Panc1 (cell line): ENCODE measurements at regions of chr17 and their contacts with region 1.

Region 1: GRCh38 chr17:30858561-30859245 is 26.9 kb downstream of the ATAD5 start:
- DNase-seq: no peak
- ATAC-seq: no peak
- H3K4me3 ChIP-seq: no peak overlapping the region
- H3K27ac ChIP-seq: no peak overlapping the region
- H3K4me1 ChIP-seq: no peaks in the 10 kb centered on the region
- H3K27me3 ChIP-seq: no peaks in the 10 kb centered on the region
- CTCF ChIP-seq: no peak

Region 2: DNA sequence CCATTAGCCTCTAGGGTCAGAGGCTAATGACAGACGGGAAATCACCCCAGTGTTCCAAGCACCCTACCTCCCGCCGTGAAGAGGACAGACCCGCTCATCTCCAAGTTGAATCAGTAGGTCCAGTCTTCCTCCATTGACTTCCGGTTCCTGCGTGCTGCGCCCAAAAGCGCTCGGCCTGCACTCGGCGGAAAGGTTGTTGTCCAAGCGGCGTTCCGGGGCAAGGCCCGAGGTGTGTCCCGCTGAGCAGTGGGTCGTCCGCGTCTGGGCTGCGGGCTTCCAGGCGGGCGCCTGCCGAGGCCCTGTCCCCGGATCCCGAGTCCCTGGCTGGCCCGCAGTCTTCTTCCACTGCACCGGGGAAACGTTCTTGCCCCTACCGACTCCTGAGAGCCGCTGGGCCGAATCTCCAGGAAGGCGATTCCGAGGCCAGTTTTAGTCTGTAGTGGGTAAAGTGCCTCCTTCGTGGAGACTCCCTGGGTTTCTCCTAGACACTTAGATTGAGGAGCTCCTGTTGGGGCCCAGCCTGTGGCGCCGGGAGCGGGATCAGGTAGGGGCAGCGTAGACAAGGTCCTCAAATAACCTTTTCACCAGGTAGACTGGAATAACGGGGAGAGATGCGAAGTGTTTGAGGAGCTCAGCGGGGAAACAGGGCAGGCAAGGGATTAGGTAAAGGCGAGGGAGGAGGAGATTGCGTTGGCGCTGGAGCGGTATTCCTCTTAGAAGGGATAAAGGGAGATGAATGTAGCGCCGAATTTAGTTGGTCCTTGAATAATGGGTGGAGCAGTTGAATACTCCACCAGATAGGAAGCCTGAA is 47.6 kb after region 1 on chr17 and contains the start of gene TEFM:
- CTCF ChIA-PET with region 1: no interaction called
- POLR2A ChIA-PET with region 1: no interaction called
- in situ Hi-C with region 1: no loop called
- intact Hi-C with region 1: no loop called
- DNase-seq: peak; percentile 72
- ATAC-seq: peak; percentile 98
- H3K4me3 ChIP-seq: peak within 1 kb of the TSS; percentile 88 to 99
- H3K27ac ChIP-seq: peak within 1 kb of the TSS; percentile 95
- H3K4me1 ChIP-seq: no peaks in the 10 kb centered on the region
- H3K27me3 ChIP-seq: no peaks in the 10 kb centered on the region
- CTCF ChIP-seq: no peak
- total RNA-seq, gene TEFM: 13.0 TPM

Region 3: DNA sequence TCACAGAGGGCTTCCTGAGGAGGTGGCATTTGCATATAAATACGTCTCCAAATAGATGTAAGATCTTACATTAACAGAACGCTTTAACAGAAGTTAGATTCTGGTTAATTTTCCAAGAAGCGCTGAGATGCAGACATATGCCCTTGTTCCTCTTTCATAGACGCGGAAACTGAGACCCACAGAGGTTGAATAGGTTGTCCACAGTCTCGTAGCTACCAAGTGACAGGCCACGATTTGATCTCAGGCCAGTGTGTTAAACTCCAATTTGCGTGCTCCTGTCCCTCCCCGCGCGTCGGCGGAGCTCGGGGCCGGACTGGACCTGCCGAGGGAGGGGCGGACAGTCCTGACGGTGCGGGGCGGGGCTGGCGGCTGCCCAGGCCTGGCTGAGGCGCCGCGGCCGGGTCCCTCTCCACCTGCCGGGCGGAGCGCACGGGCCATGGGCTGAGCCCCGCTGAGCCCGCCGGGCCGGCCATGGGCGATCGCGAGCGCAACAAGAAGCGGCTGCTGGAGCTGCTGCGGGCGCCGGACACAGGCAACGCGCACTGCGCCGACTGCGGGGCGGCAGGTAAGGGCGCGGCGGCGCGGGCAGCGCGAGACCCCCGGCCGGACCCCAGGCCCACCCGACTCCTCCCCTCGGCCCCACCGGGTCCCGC is 63.0 kb after region 1 on chr17 and contains the start of gene ADAP2:
- CTCF ChIA-PET with region 1: no interaction called
- POLR2A ChIA-PET with region 1: interaction called, 16 read pairs
- in situ Hi-C with region 1: no loop called
- intact Hi-C with region 1: no loop called
- DNase-seq: no peak
- ATAC-seq: peak; percentile 87
- H3K4me3 ChIP-seq: peak within 1 kb of the TSS; percentile 43 to 53
- H3K27ac ChIP-seq: no peak within 1 kb of the TSS
- H3K4me1 ChIP-seq: peaks cover 5% of the 10 kb centered on the region; the same call in 1 of the 2 replicates
- H3K27me3 ChIP-seq: peaks cover 9% of the 10 kb centered on the region
- CTCF ChIP-seq: no peak
- total RNA-seq, gene ADAP2: 2.4 TPM